Caco-2 (cell line): ENCODE measurements at regions of chrX and their contacts with region 1.

Region 1: GRCh38 chrX:11967986-11968859 is 170.1 kb upstream of the FRMPD4 start:
- DNase-seq: peak; percentile 69 to 77
- H3K4me3 ChIP-seq: no peak overlapping the region
- H3K4me3 Mint-ChIP-seq: no peak overlapping the region
- H3K27ac Mint-ChIP-seq: peak overlapping the region; percentile 57
- H3K4me1 ChIP-seq: peaks cover 19% of the 10 kb centered on the region
- H3K4me1 Mint-ChIP-seq: no peaks in the 10 kb centered on the region
- H3K27me3 ChIP-seq: no peaks in the 10 kb centered on the region
- H3K27me3 Mint-ChIP-seq: no peaks in the 10 kb centered on the region
- CTCF ChIP-seq: no peak

Region 2: GRCh38 chrX:11813341-11813740 is 154.9 kb before region 1 on chrX:
- CTCF ChIA-PET with region 1: no interaction called
- POLR2A ChIA-PET with region 1: no interaction called
- intact Hi-C with region 1: no loop called
- DNase-seq: no peak
- H3K4me3 ChIP-seq: no peak overlapping the region
- H3K4me3 Mint-ChIP-seq: no peak overlapping the region
- H3K27ac Mint-ChIP-seq: no peak overlapping the region
- H3K4me1 ChIP-seq: no peaks in the 10 kb centered on the region
- H3K4me1 Mint-ChIP-seq: no peaks in the 10 kb centered on the region
- H3K27me3 ChIP-seq: no peaks in the 10 kb centered on the region
- H3K27me3 Mint-ChIP-seq: peaks cover 7% of the 10 kb centered on the region
- CTCF ChIP-seq: no peak

Region 3: GRCh38 chrX:11998944-11999343 is 30.7 kb after region 1 on chrX:
- CTCF ChIA-PET with region 1: interaction called, 3 read pairs
- POLR2A ChIA-PET with region 1: no interaction called
- intact Hi-C with region 1: loop called (anchors 2 kb)
- DNase-seq: peak in 1 of 2 experiments; percentile 2
- H3K4me3 ChIP-seq: no peak overlapping the region
- H3K4me3 Mint-ChIP-seq: no peak overlapping the region
- H3K27ac Mint-ChIP-seq: no peak overlapping the region
- H3K4me1 ChIP-seq: no peaks in the 10 kb centered on the region
- H3K4me1 Mint-ChIP-seq: no peaks in the 10 kb centered on the region
- H3K27me3 ChIP-seq: no peaks in the 10 kb centered on the region
- H3K27me3 Mint-ChIP-seq: no peaks in the 10 kb centered on the region
- CTCF ChIP-seq: peak in 1 of 2 experiments; percentile 3

Region 4: GRCh38 chrX:12013220-12013619 is 45.0 kb after region 1 on chrX:
- CTCF ChIA-PET with region 1: no interaction called
- POLR2A ChIA-PET with region 1: no interaction called
- intact Hi-C with region 1: no loop called
- DNase-seq: no peak
- H3K4me3 ChIP-seq: no peak overlapping the region
- H3K4me3 Mint-ChIP-seq: no peak overlapping the region
- H3K27ac Mint-ChIP-seq: no peak overlapping the region
- H3K4me1 ChIP-seq: no peaks in the 10 kb centered on the region
- H3K4me1 Mint-ChIP-seq: peaks cover 6% of the 10 kb centered on the region
- H3K27me3 ChIP-seq: no peaks in the 10 kb centered on the region
- H3K27me3 Mint-ChIP-seq: peaks cover 2% of the 10 kb centered on the region
- CTCF ChIP-seq: no peak